ENCODE measurements at regions of chr14 and their contacts with region 1.

Region 1: DNA sequence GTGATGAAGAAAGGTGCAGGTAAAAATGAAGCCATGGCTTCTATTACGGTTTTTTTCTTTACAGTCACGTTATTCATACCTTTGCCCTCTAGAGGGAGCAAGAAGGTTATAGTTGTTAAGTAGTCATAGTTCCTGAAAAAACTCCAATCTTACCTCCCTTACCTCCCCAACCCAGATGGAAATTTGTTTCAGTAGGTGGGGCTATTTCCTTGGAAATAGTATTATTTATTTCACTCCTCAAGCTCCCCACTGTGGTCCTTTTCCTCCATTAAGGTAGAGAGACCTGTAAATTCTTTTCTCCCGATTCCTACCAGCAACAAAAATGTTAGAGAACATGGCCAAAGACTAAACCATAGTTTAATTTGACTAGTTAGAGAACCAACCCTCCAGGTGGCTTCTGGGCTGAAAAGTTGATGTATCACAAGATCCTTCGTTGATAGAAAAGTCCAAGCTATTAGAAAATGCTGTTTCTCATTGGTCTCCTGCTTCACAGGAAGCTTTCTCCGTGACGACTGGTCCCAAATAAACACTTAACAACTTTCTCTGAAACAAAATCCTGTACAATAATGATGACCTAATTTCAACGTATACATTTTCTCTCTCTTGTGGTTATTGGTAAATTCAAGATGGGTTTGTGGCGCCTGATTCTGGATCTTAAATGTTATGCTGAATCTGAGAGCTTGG is 43.5 kb downstream of the TMX1 start:
- DNase-seq: no peak

Region 2: DNA sequence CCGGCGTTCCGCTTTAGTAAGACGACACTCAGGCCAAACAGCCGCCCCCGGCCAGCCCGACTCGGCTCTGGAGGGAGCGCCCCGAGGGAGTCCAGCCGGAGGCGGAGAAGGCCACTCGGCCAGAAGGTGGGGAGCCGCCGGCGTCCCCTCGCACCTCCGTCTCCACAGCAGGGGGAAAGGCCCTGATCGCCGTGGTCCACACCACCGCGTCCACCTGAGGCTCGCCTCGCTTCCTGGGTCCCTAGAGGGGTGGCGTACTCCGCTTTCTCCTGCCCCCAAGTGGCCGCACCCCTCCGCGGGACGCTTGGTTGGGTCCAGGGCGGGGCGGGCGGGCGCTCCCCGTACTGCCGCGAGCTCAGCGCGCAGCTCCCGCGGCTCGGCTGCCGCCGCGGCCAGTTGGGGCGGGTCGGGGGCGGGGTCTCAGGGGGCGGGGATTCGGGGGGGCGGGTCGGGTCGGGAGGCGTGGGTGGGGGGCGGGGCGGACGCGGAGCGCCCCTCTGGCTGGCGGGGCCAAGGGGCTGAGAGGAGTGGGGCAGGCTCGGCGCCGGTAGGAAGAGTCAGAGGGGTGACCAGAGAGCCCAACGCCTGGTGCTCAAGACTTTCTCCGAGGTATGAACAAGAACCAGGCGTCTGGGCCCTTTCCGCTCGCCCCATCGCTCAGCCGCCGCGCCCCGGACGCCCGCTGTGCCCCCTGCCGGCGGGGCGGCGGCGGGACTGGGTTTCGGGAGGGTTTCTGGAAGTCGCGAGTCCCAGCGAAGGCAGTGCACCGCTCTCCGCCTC is 368.0 kb after region 1 on chr14 and contains the start of gene FRMD6:
- intact Hi-C with region 1: loop called (anchors 10 kb)
- DNase-seq: peak; percentile 97
- total RNA-seq, gene FRMD6: 33.1 to 49.6 TPM

Region 3: GRCh38 chr14:51780006-51780692 is 496.6 kb after region 1 on chr14:
- intact Hi-C with region 1: loop called (anchors 2 kb)
- DNase-seq: peak; percentile 86

Region 4: GRCh38 chr14:51979088-51979709 is 695.7 kb after region 1 on chr14:
- intact Hi-C with region 1: loop called in 1 of 2 experiments (anchors 5 kb)
- DNase-seq: peak; percentile 93